GM12878 (cell line): ENCODE measurements at regions of chr13 and their contacts with region 1.

Region 1: GRCh38 chr13:50244713-50245574 is 229.7 kb downstream of the KCNRG start:
- DNase-seq: peak; percentile 65
- ATAC-seq: peak; percentile 95
- H3K4me3 ChIP-seq: no peak overlapping the region
- H3K27ac ChIP-seq: no peak overlapping the region
- H3K4me1 ChIP-seq: peaks cover 9% of the 10 kb centered on the region
- H3K27me3 ChIP-seq: no peaks in the 10 kb centered on the region
- CTCF ChIP-seq: no peak
- EP300 ChIP-seq: peak; percentile 33 to 38; a peak in 1 of 4 replicates
- POLR2A ChIP-seq: no peak
- RAD21 ChIP-seq: peak; percentile 5; the same call in 1 of the 2 replicates

Region 2: DNA sequence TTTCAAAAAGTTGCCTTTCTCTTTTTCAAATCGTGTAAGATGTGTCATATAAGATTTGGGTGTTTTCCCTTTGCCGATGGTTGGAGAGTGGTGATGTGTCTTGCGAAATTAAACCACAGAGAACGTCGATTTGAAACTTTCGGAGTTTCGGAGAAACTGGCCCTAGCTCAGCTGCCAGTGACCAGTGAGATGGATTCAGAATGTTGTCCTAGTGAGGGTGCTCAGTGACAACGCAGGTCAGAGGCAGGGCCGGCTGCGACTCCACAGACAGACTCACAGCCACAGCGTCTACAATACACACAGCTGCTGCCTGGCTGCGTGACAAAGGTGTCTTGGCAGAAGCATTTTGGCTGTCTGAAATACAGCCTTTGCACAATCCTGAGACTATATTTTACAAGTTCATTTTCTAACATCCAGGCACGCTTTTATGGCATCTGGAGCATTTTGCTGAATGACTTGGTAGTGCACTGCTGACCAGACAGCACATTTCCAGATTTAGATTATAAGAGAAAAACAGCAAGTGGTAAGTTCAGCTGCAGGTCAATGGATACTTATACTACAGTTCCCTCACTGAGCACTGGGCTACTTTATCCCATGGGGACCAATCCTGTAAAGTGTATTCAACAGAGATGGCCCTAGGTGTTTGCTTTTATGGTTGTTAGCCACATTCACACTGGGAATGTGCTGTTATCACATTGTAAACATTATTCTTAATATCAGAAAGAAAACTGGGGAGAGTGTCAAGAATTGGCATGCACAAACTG is 22.2 kb before region 1 on chr13:
- CTCF ChIA-PET with region 1: interaction called, 6 read pairs
- POLR2A ChIA-PET with region 1: no interaction called
- RAD21 ChIA-PET with region 1: no interaction called
- SMC1A ChIA-PET with region 1: interaction called, 11 read pairs
- in situ Hi-C with region 1: no loop called
- intact Hi-C with region 1: no loop called
- DNase-seq: no peak
- ATAC-seq: no peak; the same call in 2 of the 3 replicates
- H3K4me3 ChIP-seq: no peak overlapping the region
- H3K27ac ChIP-seq: no peak overlapping the region
- H3K4me1 ChIP-seq: peaks cover 18% of the 10 kb centered on the region
- H3K27me3 ChIP-seq: 0 out of 4 replicates have a peak, but pooled peaks cover 1 to 3% of the 10 kb centered on the region in 2 experiments
- CTCF ChIP-seq: no peak
- EP300 ChIP-seq: no peak
- POLR2A ChIP-seq: no peak
- RAD21 ChIP-seq: no peak

Region 3: GRCh38 chr13:50365408-50366391 is 120.8 kb after region 1 on chr13:
- CTCF ChIA-PET with region 1: no interaction called
- POLR2A ChIA-PET with region 1: no interaction called
- RAD21 ChIA-PET with region 1: no interaction called
- SMC1A ChIA-PET with region 1: no interaction called
- in situ Hi-C with region 1: no loop called
- intact Hi-C with region 1: loop called (anchors 2 kb)
- DNase-seq: peak; percentile 67
- ATAC-seq: peak; percentile 81
- H3K4me3 ChIP-seq: no peak overlapping the region
- H3K27ac ChIP-seq: no peak overlapping the region
- H3K4me1 ChIP-seq: peaks cover 24% of the 10 kb centered on the region
- H3K27me3 ChIP-seq: peaks cover 0 to 4% of the 10 kb centered on the region in 2 experiments; a peak in 1 of 4 replicates
- CTCF ChIP-seq: no peak
- EP300 ChIP-seq: peak in 1 of 2 experiments; percentile 42; a peak in 1 of 4 replicates
- POLR2A ChIP-seq: no peak
- RAD21 ChIP-seq: no peak